ENCODE measurements at regions of chr17 and their contacts with region 1.

Region 1: GRCh38 chr17:76737082-76737675 is at the start of gene SRSF2:
- DNase-seq: peak; percentile 99
- ATAC-seq: peak; percentile 75
- H3K4me3 Mint-ChIP-seq: peak within 1 kb of the TSS; percentile 85
- H3K27ac Mint-ChIP-seq: peak within 1 kb of the TSS; percentile 98
- H3K4me1 Mint-ChIP-seq: peaks cover 40% of the 10 kb centered on the region
- H3K27me3 Mint-ChIP-seq: no peaks in the 10 kb centered on the region
- total RNA-seq, gene SRSF2: 335 to 340 TPM

Region 2: DNA sequence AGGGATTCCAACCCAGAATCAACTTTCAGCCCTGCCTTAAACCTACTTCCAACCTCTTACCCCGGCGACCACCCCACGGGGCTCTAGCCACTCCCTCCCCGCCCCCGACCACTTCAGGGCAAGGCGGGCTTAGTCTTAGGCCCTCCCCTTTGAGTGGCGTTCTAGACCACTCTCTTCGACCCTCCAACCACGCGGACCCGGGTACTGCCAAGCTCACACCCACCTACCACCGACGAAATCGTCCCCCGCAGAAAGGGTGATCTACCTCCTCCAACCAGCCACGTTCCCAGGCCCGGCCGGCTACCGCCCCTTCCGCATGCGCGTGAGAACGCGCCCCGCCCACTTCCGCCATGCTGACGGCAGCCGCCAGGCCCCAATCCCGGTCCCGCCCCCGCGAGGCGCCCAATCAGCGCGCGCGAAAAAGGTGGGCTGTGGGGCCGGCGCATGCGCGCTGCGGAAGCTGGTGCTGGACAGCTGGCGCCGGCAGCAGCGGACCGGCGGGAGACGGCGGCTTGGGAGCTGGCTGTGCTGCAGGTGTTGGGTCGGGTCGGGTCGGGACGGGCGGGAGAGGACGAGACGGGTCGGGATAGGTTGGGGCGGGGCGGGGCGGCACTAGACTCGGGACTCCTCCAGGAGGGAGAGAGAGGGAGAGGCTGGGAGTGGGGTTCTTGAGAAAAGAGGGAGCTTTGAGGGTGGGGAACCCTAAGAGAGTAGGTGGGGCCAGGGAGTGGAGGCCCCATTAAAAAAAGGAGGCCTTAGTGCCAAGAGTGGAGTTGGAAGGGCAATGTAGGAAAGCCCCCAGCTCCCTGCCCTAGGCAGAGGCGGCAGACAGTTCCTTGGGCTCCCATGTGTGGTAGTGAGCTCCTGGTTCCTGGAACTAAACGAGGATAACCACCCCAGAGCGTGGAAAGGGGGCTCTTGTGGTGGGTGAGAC is 1960.9 kb before region 1 on chr17 and contains the start of gene NAT9:
- CTCF ChIA-PET with region 1: no interaction called
- POLR2A ChIA-PET with region 1: no interaction called
- intact Hi-C with region 1: loop called in 1 of 2 experiments (anchors 10 kb)
- DNase-seq: peak; percentile 100
- ATAC-seq: peak; percentile 76
- H3K4me3 Mint-ChIP-seq: peak within 1 kb of the TSS; percentile 98
- H3K27ac Mint-ChIP-seq: peak within 1 kb of the TSS; percentile 94
- H3K4me1 Mint-ChIP-seq: peaks cover 59% of the 10 kb centered on the region
- H3K27me3 Mint-ChIP-seq: no peaks in the 10 kb centered on the region
- total RNA-seq, gene NAT9: 23.7 to 39.6 TPM

Region 3: GRCh38 chr17:75978938-75979704 is 758.1 kb before region 1 on chr17 and contains the starts of genes ACOX1 and TEN1:
- CTCF ChIA-PET with region 1: no interaction called
- POLR2A ChIA-PET with region 1: no interaction called
- intact Hi-C with region 1: loop called in 1 of 2 experiments (anchors 5 kb)
- DNase-seq: peak; percentile 98
- ATAC-seq: peak; percentile 96
- H3K4me3 Mint-ChIP-seq: peak within 1 kb of the TSS; percentile 89
- H3K27ac Mint-ChIP-seq: peak within 1 kb of the TSS; percentile 94
- H3K4me1 Mint-ChIP-seq: peaks cover 30% of the 10 kb centered on the region
- H3K27me3 Mint-ChIP-seq: no peaks in the 10 kb centered on the region
- total RNA-seq, gene ACOX1: 27.7 to 33.1 TPM
- total RNA-seq, gene TEN1: 9.8 to 13.6 TPM

Region 4: DNA sequence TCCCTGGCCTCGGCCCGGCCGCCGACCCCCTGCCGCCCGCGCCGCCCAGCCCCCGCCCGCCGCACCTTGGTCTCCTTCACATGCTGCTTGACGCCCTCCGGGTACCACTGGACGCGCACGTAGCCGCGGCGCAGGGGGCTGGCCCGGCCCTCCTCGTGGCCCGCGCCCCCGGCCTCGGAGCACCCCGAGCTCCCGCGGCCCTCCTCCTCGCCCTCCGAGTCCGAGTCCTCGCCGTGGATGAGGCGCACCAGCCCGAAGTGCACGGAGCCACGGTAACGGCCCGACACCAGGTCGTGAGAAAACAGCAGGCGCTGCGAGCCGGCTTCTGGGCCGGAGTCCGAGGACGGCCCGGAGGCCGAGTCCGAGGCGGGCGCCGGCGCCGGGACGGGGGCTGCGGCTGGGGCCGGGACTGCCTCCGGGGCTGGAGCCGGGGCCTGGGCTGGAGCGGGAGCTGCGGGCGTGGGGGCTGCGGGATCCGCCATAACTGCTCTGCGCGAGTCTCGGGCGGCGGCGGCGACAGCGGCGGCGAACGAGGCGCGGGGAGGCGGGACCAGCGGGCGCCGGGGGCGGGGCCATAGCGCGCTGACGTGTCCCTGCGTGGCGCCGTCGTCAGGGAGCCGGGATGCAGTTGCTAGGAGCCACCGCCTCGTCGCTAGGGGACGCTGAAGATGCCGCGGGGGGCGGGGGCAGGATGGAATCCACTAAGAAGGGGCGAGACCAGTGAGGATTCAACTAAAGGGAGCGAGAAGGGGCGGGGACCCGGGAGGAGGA is 284.3 kb before region 1 on chr17 and contains the start of gene UBE2O:
- CTCF ChIA-PET with region 1: no interaction called
- POLR2A ChIA-PET with region 1: no interaction called
- intact Hi-C with region 1: loop called in 1 of 2 experiments (anchors 1 kb)
- DNase-seq: peak; percentile 96
- ATAC-seq: peak; percentile 96
- H3K4me3 Mint-ChIP-seq: peak within 1 kb of the TSS; percentile 84
- H3K27ac Mint-ChIP-seq: peak within 1 kb of the TSS; percentile 55
- H3K4me1 Mint-ChIP-seq: peaks cover 36% of the 10 kb centered on the region
- H3K27me3 Mint-ChIP-seq: no peaks in the 10 kb centered on the region
- total RNA-seq, gene UBE2O: 28.1 to 30.7 TPM

Region 5: DNA sequence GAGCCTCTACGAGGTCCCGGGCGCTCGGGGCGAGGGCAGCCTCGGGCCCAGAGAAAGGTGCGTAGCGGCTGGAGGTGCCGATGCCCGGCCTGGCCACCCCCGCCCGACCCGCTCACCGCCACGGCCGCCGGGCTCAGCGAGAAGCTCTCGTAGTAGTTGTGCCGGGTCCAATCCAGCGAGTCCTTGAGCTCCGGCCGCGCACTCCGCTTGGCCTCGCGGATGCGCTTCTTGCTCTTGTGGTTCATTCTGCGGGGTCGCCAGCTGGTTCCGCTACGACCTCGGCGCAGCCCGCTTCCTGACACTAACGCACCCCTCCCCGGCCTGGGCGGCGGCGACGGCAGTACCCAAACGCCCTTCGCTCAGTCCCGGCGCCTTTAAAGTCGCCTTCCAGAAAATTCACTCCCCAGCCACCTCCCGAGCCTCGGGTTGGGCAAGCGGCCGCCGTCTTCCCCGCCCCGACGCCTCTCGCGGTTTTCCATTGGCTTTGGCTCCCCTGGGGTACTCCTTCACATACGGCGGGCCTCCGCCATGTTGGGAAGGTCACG is 10.9 kb before region 1 on chr17 and contains the start of gene JMJD6:
- CTCF ChIA-PET with region 1: interaction called, 4 read pairs
- POLR2A ChIA-PET with region 1: interaction called, 44 read pairs
- intact Hi-C with region 1: loop called (anchors 1 kb)
- DNase-seq: peak; percentile 97
- ATAC-seq: peak; percentile 87
- H3K4me3 Mint-ChIP-seq: peak within 1 kb of the TSS; percentile 97
- H3K27ac Mint-ChIP-seq: peak within 1 kb of the TSS; percentile 98
- H3K4me1 Mint-ChIP-seq: peaks cover 54% of the 10 kb centered on the region
- H3K27me3 Mint-ChIP-seq: no peaks in the 10 kb centered on the region
- total RNA-seq, gene JMJD6: 51.3 to 65.5 TPM

Region 6: GRCh38 chr17:77088455-77089123 is 351.4 kb after region 1 on chr17:
- CTCF ChIA-PET with region 1: no interaction called
- POLR2A ChIA-PET with region 1: no interaction called
- intact Hi-C with region 1: loop called in 1 of 2 experiments (anchors 5 kb)
- DNase-seq: peak; percentile 89
- ATAC-seq: peak; percentile 83
- H3K4me3 Mint-ChIP-seq: peak overlapping the region; percentile 98
- H3K27ac Mint-ChIP-seq: peak overlapping the region; percentile 97
- H3K4me1 Mint-ChIP-seq: peaks cover 50% of the 10 kb centered on the region
- H3K27me3 Mint-ChIP-seq: no peaks in the 10 kb centered on the region

Region 7: GRCh38 chr17:77465358-77466041 is 728.3 kb after region 1 on chr17:
- CTCF ChIA-PET with region 1: no interaction called
- POLR2A ChIA-PET with region 1: no interaction called
- intact Hi-C with region 1: loop called in 1 of 2 experiments (anchors 10 kb)
- DNase-seq: peak; percentile 90
- ATAC-seq: peak; percentile 83
- H3K4me3 Mint-ChIP-seq: peak overlapping the region; percentile 62
- H3K27ac Mint-ChIP-seq: peak overlapping the region; percentile 98
- H3K4me1 Mint-ChIP-seq: peaks cover 90% of the 10 kb centered on the region
- H3K27me3 Mint-ChIP-seq: no peaks in the 10 kb centered on the region

Measured in activated CD4-positive, alpha-beta T cell treated with anti-CD3 and anti-CD28 coated beads for 36 hours (primary cell).